ENCODE measurements at regions of chr20 and their contacts with region 1.

Region 1: GRCh38 chr20:40953856-40954255 is 74.8 kb upstream of the TOP1 start:
- DNase-seq: no peak
- H3K4me3 ChIP-seq: no peak overlapping the region
- H3K27ac ChIP-seq: no peak overlapping the region
- H3K4me1 ChIP-seq: no peaks in the 10 kb centered on the region
- H3K27me3 ChIP-seq: no peaks in the 10 kb centered on the region
- CTCF ChIP-seq: no peak
- EP300 ChIP-seq: no peak
- POLR2A ChIP-seq: no peak

Region 2: GRCh38 chr20:40683221-40683893 is 270.5 kb before region 1 on chr20:
- intact Hi-C with region 1: loop called in 1 of 4 experiments (anchors 5 kb)
- DNase-seq: peak in 3 of 5 donors; percentile 16 to 49 (median 28)
- H3K4me3 ChIP-seq: peak overlapping the region; percentile 18
- H3K27ac ChIP-seq: no peak overlapping the region
- H3K4me1 ChIP-seq: peaks cover 9% of the 10 kb centered on the region
- H3K27me3 ChIP-seq: no peaks in the 10 kb centered on the region
- CTCF ChIP-seq: no peak
- EP300 ChIP-seq: no peak
- POLR2A ChIP-seq: no peak

Region 3: DNA sequence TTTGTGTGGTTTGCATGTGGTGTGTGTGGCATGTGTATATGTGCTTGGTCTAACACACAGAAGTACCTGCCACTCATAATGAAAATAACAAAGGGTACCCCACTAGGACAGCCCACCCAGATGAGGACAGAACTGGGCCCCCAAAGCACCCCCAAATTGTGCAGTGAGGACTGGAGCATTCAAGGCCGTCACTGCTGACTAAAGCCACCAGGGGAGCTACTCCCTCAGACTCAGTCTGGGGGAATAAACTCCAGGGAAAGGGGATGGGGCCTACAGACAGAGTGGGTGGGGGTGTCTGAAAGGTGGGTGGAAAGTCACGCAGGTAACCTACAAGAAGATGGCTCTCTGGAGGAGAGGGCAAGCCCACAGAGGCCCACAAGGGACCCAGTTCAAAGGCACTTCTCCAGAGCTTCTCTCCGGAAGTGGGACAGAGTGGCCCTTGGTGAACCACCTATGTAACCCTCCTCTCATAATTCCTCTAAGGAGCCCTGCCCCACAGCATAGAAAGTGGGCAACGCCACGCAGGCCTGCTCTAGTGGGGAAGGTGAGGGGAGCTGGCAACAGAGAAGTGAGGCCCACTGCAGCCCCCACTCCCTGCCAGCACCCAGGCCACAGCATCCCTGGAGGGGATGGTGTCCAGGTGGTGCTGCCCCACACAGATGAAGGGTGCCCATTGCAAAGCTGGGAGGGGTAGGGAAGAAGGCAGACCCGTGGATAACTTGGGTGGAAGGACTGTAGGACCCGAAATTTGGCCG is 142.0 kb before region 1 on chr20:
- intact Hi-C with region 1: no loop called
- DNase-seq: no peak
- H3K4me3 ChIP-seq: no peak overlapping the region
- H3K27ac ChIP-seq: no peak overlapping the region
- H3K4me1 ChIP-seq: no peaks in the 10 kb centered on the region
- H3K27me3 ChIP-seq: no peaks in the 10 kb centered on the region
- CTCF ChIP-seq: no peak
- EP300 ChIP-seq: no peak
- POLR2A ChIP-seq: no peak

Measured in ovary (tissue), 10 donors.